Activated CD4-positive, alpha-beta memory T cell treated with anti-CD3 and anti-CD28 coated beads, Interleukin-2, amount 10 ng/mL, durations not matched to agents 7 days and 5 days (primary cell): ENCODE measurements at regions of chr6 and their contacts with region 1.

Region 1: GRCh38 chr6:132495604-132496079 is 17.3 kb downstream of the STX7 start:
- DNase-seq: no peak
- H3K4me3 Mint-ChIP-seq: no peak overlapping the region
- H3K27ac Mint-ChIP-seq: no peak overlapping the region
- H3K4me1 Mint-ChIP-seq: peaks cover 42% of the 10 kb centered on the region
- H3K27me3 Mint-ChIP-seq: no peaks in the 10 kb centered on the region

Region 2: DNA sequence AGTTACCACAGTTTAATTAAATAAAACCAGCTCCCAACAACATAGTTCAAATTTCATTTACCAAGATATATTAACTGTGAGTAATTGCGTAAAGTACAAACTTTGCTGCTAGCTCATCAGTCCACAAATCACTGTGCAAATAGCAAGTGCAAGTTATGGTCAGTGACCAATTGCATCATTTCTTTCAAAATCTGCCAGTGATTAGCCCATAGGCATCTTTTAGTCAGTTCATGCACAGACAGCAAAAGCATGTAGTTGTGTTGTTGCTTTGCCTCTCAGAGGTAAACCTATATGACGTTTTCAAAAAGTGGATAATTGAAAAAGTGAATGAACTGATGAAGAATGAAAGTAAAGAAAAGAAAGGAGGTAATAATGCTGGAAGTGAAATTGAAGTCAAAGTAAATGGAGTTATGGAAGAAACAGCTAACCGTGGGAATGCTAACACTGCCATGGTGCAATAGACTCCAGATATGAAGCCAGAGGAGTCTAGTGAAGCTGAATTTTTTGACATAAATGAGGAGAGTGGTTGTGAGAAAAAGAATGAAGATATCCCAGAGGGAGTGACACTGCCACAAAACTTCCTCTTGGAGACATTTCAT is 651.3 kb before region 1 on chr6:
- CTCF ChIA-PET with region 1: no interaction called
- POLR2A ChIA-PET with region 1: no interaction called
- DNase-seq: no peak
- H3K4me3 Mint-ChIP-seq: no peak overlapping the region
- H3K27ac Mint-ChIP-seq: no peak overlapping the region
- H3K4me1 Mint-ChIP-seq: no peaks in the 10 kb centered on the region
- H3K27me3 Mint-ChIP-seq: peaks cover 3% of the 10 kb centered on the region

Region 3: GRCh38 chr6:132412656-132413498 is 82.8 kb before region 1 on chr6:
- CTCF ChIA-PET with region 1: no interaction called
- POLR2A ChIA-PET with region 1: no interaction called
- DNase-seq: no peak
- H3K4me3 Mint-ChIP-seq: no peak overlapping the region
- H3K27ac Mint-ChIP-seq: no peak overlapping the region
- H3K4me1 Mint-ChIP-seq: no peaks in the 10 kb centered on the region
- H3K27me3 Mint-ChIP-seq: peaks cover 12% of the 10 kb centered on the region

Region 4: GRCh38 chr6:132483779-132484679 is 11.6 kb before region 1 on chr6:
- CTCF ChIA-PET with region 1: interaction called, 21 read pairs
- POLR2A ChIA-PET with region 1: interaction called, 3 read pairs
- DNase-seq: peak; percentile 33
- H3K4me3 Mint-ChIP-seq: no peak overlapping the region
- H3K27ac Mint-ChIP-seq: no peak overlapping the region
- H3K4me1 Mint-ChIP-seq: peaks cover 22% of the 10 kb centered on the region
- H3K27me3 Mint-ChIP-seq: no peaks in the 10 kb centered on the region

Region 5: DNA sequence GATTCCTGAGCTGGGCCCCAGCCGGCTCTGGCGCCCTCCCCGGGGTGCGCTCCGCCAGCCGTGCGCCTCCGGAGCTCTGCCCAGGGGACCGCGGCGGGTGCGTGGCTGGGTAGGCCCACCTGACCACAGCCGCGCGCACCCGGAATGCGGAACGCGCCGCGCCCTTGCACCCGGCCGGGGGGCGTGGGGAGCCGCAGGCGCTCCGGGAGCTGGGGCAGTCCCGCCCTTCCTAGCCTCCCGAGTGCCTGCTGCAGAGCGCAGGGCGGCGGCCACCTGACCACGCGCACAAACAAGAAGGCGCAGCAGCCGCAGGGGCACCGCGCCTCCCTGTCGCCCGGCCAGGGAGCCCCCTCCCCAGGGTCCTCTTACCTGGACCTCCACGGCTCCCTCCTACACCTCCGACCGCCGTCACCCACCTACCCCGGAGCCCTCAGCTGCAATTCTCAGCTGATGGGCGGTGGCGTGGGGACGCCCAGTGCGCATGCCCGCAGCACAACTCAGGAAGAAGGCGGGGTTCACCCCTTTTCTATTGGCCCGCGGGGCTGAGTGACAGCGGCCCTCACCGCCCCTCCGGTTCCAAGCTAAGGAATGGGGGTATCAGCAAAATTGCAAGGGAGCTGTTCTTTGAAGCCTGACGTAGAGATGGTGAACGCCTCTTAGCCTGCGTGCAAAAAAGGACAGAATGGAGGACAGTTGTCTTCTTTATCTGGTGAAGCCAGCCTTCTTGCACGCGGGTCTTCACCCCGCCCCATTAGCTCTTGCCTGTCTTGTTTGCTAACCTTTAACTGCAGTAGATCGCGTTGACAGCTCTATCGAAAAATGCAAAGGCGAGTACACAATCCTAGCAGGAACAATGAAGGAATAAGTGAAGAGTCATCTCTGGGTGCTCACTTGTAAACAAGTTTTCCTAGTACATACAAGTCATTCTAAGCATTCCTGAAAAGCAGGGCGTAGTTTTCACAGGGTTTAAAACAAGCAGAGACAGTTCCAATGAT is 17.3 kb after region 1 on chr6 and contains the start of gene STX7:
- CTCF ChIA-PET with region 1: interaction called, 7 read pairs
- POLR2A ChIA-PET with region 1: interaction called, 21 read pairs
- DNase-seq: peak; percentile 87
- H3K4me3 Mint-ChIP-seq: peak within 1 kb of the TSS; percentile 95
- H3K27ac Mint-ChIP-seq: peak within 1 kb of the TSS; percentile 82
- H3K4me1 Mint-ChIP-seq: peaks cover 27% of the 10 kb centered on the region
- H3K27me3 Mint-ChIP-seq: peaks cover 18% of the 10 kb centered on the region
- total RNA-seq, gene STX7: 19.9 to 20.2 TPM

Region 6: DNA sequence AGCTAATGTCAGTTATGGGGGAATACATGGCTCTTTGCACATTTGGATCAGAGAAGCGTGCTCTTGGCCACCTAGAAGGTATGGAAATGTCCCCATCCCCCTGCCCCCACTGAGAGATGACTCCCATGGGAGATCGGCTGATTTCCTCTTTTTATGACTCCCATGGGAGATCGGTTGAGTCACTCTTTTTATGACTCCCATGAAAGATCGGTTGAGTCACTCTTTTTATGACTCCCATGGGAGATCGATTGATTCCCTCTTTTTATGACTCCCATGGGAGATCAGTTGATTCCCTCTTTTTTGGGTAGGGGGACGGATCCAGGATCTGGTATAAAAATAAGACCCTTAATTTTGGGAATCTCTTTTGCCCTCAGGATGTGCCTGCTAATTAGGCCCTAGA is 32.1 kb after region 1 on chr6:
- CTCF ChIA-PET with region 1: no interaction called
- POLR2A ChIA-PET with region 1: no interaction called
- DNase-seq: no peak
- H3K4me3 Mint-ChIP-seq: no peak overlapping the region
- H3K27ac Mint-ChIP-seq: no peak overlapping the region
- H3K4me1 Mint-ChIP-seq: no peaks in the 10 kb centered on the region
- H3K27me3 Mint-ChIP-seq: peaks cover 31% of the 10 kb centered on the region